Activated naive CD4-positive, alpha-beta T cell treated with anti-CD3 and anti-CD28 coated beads for 36 hours (primary cell): ENCODE measurements at regions of chr14 and their contacts with region 1.

Region 1: DNA sequence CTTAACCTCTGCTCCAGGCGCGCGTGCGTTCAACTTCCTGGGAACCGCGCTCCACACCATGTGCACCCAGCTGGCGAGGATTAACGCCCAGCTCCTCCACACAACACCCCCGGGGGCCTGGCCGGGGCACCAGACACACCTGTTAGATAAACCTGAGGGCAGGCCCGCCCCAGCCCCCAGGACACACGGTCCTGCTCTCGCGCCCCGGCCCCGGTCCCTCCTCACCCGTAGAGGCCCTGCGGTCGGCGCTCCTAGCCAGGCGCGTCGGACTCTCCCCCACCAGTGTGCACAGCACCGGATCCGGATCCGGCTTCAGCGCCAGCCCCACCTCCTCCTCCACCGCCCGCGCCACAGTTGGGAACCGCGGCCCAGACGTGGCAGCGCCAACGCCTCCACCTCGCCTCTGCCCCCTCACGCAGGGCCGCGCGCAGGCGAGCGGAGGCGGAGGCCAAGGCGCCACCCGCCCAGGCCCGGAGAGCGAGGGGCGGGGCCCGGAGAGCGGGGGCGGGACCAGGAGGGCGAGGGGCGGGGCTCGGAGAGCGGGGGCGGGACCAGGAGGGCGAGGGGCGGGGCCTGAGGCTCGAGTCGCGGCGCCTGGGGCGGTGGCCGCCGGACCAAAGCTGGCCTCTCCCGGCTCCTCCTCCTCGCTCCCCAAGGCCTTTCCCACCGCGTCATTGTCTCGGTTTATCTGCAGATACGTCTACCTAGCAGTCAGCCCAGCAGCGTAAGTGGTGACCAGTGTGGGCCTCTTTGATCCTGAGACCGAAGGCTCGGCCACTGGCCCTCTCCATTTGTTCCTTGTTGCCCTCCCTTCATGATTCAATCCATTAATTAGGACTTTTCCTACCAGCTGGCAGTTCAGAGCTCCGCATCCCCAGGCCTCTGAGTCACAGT is at the start of gene GNPNAT1:
- DNase-seq: peak; percentile 85
- H3K4me3 Mint-ChIP-seq: peak within 1 kb of the TSS; percentile 94
- H3K27ac Mint-ChIP-seq: peak within 1 kb of the TSS; percentile 66
- H3K4me1 Mint-ChIP-seq: peaks cover 29% of the 10 kb centered on the region
- H3K27me3 Mint-ChIP-seq: no peaks in the 10 kb centered on the region
- total RNA-seq, gene GNPNAT1: 26.1 to 26.9 TPM

Region 2: DNA sequence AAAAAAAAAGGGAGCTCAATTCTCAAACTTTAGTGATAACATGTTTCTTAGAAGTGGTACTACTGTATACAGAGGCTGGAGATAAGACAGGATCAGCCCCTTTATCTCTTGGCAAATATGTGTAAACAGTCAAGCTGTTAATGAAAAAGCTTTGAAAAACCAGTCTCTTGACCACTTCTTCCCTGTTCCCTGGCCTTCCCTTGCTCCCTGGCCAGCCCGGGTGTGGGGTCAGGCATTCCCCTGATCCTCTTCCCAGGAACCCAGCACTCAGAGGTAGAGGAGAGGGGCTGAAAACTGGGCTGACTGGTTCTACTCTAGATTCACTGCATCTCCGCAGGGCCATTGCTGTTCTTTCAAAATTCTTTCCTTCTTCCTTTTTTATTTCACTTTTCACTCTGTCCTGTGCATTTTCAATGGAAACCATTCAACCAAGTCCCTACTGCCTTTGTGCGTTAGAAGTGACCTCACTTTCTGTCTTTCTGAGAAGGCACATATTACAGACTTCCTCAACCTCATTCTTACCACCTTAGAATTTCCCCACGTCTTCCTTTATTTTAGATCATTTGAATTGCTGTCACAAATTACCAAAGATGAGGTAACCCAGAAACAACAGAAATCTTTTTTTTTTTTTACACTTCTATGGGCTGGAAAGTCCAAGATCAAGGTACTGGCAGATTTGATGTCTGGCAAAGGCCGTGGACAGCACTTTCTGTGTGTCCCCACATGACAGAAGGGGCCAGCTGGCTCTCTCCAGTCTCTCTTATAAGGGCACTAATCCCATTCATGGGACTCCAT is 925.3 kb before region 1 on chr14:
- CTCF ChIA-PET with region 1: no interaction called
- intact Hi-C with region 1: loop called (anchors 5 kb)
- DNase-seq: no peak
- H3K4me3 Mint-ChIP-seq: no peak overlapping the region
- H3K27ac Mint-ChIP-seq: no peak overlapping the region
- H3K4me1 Mint-ChIP-seq: peaks cover 27% of the 10 kb centered on the region
- H3K27me3 Mint-ChIP-seq: no peaks in the 10 kb centered on the region

Region 3: DNA sequence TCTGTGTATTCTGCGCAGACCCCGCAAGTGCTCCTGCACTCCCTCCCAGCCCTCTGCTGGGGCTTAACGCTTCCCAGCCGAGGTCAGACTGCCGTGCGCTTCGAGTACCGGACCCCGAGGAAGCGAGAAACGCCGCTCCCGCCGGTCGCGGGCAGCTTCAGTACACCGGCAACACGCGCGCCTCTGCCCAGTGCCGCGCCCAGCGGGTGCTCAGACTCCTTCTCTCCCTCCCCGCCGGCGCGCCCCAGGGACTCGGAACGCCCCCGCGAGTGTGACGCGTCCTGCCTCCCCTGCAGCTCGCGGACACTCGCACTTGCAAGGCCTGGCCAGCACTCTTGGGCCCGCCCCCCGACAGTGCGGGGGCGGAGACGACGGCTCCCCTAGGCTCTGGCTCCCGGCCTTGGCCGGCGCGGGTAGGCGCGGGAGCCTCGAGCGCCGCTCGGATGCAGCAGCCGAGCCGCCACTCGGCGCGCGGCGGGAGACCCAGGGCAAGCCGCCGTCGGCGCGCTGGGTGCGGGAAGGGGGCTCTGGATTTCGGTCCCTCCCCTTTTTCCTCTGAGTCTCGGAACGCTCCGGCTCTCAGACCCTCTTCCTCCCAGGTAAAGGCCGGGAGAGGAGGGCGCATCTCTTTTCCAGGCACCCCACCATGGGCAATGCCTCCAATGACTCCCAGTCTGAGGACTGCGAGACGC is 477.4 kb before region 1 on chr14 and contains the start of gene PTGER2:
- CTCF ChIA-PET with region 1: no interaction called
- intact Hi-C with region 1: loop called (anchors 5 kb)
- DNase-seq: peak; percentile 64
- H3K4me3 Mint-ChIP-seq: peak within 1 kb of the TSS; percentile 93
- H3K27ac Mint-ChIP-seq: peak within 1 kb of the TSS; percentile 79
- H3K4me1 Mint-ChIP-seq: peaks cover 56% of the 10 kb centered on the region
- H3K27me3 Mint-ChIP-seq: peaks cover 19% of the 10 kb centered on the region
- total RNA-seq, gene PTGER2: 0.67 to 1.2 TPM

Region 4: DNA sequence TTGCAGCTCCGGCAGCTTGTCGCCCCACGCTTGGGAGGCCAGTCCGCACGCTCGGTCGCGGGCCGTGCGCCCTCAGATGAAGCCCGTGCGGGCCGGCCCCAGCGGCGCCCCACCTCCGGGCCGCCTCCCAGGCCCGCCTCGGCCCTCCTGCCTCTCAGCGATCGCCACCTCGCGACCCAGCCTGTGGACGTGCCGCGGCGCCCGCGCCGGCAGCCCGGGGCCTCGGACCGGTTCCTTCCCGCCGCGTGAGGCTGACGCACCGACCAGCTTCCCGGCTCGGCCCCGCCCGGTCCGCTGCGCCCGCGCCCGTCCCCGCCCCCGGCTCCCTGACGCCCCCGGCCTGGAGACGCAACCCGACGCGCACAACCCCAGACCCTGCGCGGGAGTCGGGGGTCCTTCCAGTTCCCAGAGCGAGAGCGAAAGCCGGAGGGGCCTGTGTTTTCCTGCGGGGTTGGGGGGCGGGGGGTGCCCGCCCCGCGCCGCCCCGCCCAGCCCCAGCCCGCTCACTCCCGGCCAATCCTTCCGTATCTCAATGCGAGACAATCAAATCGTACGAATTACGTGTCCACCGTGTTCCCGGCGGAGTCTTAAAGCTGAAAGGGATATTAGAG is 95.9 kb before region 1 on chr14 and contains the start of gene ERO1A:
- CTCF ChIA-PET with region 1: no interaction called
- intact Hi-C with region 1: loop called (anchors 1 kb)
- DNase-seq: peak; percentile 72
- H3K4me3 Mint-ChIP-seq: peak within 1 kb of the TSS; percentile 99
- H3K27ac Mint-ChIP-seq: peak within 1 kb of the TSS; percentile 99
- H3K4me1 Mint-ChIP-seq: peaks cover 33% of the 10 kb centered on the region
- H3K27me3 Mint-ChIP-seq: no peaks in the 10 kb centered on the region
- total RNA-seq, gene ERO1A: 87.4 to 90.4 TPM

Region 5: DNA sequence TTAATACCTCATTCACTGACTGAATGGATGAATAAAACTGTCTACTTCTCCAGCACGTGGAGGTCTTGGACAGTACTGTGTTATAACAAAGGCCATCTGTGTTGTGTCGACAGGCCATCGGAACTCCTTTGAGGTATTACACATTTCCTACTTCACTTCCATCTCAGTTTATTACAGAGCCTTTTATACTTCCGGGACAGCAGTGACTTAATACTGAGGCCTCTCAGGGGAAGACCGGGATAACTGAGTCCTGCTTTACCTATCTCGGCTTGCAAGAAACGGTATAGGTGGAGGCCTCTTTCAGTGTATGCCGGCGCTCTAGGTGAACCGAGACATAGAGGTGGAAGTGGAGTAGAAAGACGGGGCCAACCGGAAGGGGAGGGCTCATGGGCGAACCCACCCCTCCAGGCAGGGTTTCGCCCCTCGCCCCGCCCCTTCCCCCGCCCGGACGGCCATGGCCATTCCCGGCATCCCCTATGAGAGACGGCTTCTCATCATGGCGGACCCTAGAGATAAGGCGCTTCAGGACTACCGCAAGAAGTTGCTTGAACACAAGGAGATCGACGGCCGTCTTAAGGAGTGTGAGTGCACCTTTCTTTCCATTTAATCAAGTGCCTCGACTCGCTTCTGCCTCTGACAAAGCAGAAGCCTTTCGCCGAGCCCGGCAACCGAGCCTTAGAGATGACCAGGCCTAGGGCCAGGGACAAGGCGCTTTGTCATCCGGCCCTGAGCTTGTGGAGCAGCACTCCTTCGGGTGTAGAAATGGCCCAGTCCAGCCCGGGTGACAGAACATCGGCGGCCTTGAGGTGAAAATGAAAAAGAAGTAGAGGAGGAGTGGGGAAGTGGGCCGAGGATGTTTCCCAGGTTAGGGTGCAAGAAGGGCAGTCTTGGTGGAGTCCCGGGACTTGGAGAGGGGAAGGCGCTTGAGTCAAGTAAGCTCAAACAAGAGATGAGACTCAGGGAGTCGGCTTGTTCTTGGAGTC is 84.4 kb before region 1 on chr14 and contains the start of gene PSMC6:
- CTCF ChIA-PET with region 1: no interaction called
- intact Hi-C with region 1: loop called (anchors 1 kb)
- DNase-seq: peak; percentile 97
- H3K4me3 Mint-ChIP-seq: peak within 1 kb of the TSS; percentile 100
- H3K27ac Mint-ChIP-seq: peak within 1 kb of the TSS; percentile 97
- H3K4me1 Mint-ChIP-seq: peaks cover 47% of the 10 kb centered on the region
- H3K27me3 Mint-ChIP-seq: no peaks in the 10 kb centered on the region
- total RNA-seq, gene PSMC6: 103 to 114 TPM

Region 6: DNA sequence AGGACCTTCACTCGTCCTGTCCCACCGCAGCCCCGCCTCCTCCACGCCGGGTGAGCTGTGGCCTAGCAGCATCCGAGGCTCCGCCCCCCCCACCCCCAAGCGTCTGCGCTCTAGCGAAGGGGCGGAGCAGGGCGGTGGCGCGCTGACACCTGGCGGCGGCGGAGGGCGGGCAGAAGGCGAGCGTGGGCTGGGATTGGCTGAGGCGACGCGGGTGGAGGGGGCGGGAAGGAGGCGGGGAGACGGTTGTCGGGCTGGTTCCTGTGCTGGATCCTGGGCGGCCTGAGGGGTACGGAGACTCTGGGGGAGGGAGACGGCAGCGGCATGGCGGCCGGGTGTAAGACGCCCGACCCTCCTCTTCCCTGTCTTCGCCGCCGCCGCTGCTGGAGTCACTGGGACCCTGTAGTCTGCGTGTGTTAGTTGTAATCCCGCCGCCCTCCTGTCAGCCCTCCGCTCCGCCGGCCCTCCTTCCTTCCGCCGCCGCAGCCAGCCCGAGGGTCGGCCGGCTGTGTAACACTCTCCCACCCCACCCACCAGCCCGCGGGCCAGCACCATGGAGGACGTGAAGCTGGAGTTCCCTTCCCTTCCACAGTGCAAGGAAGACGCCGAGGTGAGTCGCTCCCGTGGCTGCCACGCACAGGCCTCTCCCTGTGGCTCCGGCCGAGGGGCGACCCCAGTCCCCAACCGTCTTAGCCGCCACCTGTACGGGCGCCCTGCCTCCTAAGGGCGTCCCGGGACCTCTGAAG is 61.4 kb before region 1 on chr14 and contains the start of gene STYX:
- CTCF ChIA-PET with region 1: no interaction called
- intact Hi-C with region 1: loop called (anchors 1 kb)
- DNase-seq: peak; percentile 98
- H3K4me3 Mint-ChIP-seq: peak within 1 kb of the TSS; percentile 84
- H3K27ac Mint-ChIP-seq: peak within 1 kb of the TSS; percentile 86
- H3K4me1 Mint-ChIP-seq: peaks cover 38% of the 10 kb centered on the region
- H3K27me3 Mint-ChIP-seq: no peaks in the 10 kb centered on the region
- total RNA-seq, gene STYX: 13.3 to 14.1 TPM

Region 7: GRCh38 chr14:52741865-52742264 is 49.6 kb before region 1 on chr14:
- CTCF ChIA-PET with region 1: no interaction called
- intact Hi-C with region 1: loop called (anchors 1 kb)
- DNase-seq: no peak
- H3K4me3 Mint-ChIP-seq: peak overlapping the region; percentile 68
- H3K27ac Mint-ChIP-seq: peak overlapping the region; percentile 95
- H3K4me1 Mint-ChIP-seq: peaks cover 63% of the 10 kb centered on the region
- H3K27me3 Mint-ChIP-seq: no peaks in the 10 kb centered on the region

Region 8: DNA sequence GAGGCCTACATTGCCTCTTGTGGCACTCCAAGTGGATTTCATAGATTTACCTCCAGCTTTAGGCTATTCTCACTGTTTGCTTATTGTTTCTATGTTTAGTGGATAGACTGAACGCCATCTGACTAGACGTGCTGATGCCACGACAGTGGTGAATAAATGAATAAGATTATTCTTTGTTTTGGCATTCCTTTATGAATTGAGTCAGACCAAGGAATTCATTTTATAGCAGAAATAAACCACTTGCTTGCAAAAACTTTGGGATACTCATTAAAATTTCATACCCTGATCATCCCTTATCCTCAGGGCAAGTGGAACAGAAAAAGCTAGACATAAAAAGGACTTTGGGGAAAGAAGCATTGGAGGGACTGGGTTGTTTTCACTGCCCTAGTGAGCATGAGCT is 231.1 kb after region 1 on chr14:
- CTCF ChIA-PET with region 1: no interaction called
- intact Hi-C with region 1: no loop called
- DNase-seq: no peak
- H3K4me3 Mint-ChIP-seq: no peak overlapping the region
- H3K27ac Mint-ChIP-seq: no peak overlapping the region
- H3K4me1 Mint-ChIP-seq: peaks cover 5% of the 10 kb centered on the region
- H3K27me3 Mint-ChIP-seq: no peaks in the 10 kb centered on the region